ENCODE measurements at regions of chr10 and their contacts with region 1.

Region 1: GRCh38 chr10:101060036-101060950 is 1.5 kb upstream of the KAZALD1 start:
- DNase-seq: peak; percentile 70 to 97 (median 94)
- ATAC-seq: peak; percentile 82
- H3K4me3 ChIP-seq: peak overlapping the region; percentile 96
- H3K4me3 Mint-ChIP-seq: peak overlapping the region; percentile 90 to 99 (median 96)
- H3K27ac ChIP-seq: peak overlapping the region; percentile 96
- H3K27ac Mint-ChIP-seq: peak overlapping the region; percentile 86 to 98 (median 93)
- H3K4me1 ChIP-seq: peaks cover 12 to 21% of the 10 kb centered on the region in 2 donors
- H3K4me1 Mint-ChIP-seq: peaks cover 16 to 61% (median 31%) of the 10 kb centered on the region in 7 donors
- H3K27me3 ChIP-seq: peaks cover 5 to 18% of the 10 kb centered on the region in 2 donors
- H3K27me3 Mint-ChIP-seq: peaks cover 15 to 23% (median 18%) of the 10 kb centered on the region in 5 donors

Region 2: DNA sequence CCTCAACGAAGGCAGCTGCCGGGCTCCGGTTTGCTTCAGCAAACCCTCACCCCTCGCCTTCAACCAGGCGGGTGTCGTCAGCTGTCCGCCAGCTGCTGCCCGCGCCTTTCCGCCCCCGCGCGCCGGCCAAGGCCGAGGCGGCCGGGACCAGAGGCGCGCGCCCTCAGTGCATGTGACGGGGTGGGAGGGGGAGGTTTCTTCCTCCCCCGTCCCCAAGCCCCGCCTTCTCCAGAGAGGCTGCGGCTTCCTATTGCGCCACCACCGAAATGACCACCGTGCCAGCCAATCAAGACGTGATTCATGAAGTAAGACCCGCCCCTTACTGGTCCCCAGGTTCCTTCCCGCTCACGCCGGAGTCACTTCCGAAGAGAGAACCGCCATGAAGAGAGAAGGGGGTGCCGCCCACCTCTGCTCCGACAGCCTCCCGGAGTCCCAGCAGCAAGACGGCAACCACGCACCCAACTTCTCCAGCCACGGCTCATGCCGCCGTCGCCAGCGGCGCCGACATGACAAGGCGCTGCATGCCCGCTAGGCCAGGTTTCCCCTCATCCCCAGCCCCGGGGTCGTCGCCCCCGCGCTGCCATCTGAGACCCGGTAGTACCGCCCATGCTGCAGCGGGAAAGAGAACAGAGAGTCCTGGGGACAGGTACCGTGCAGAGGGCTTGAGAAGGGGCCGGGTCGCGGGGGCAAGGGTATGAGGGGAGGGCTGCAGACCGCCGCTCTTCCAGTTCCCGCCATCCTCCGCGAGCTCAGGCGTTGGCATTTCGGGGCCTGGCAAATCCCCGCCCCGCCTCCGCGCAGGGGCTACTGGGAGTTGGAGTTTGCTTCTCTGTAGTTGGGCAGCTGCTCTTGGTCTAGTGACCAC is 147.5 kb before region 1 on chr10 and contains the start of gene SLF2:
- CTCF ChIA-PET with region 1: no interaction called
- POLR2A ChIA-PET with region 1: no interaction called
- intact Hi-C with region 1: loop called (anchors 1 to 2 kb)
- DNase-seq: peak; percentile 69 to 91 (median 88)
- ATAC-seq: peak; percentile 96
- H3K4me3 ChIP-seq: peak within 1 kb of the TSS; percentile 96
- H3K4me3 Mint-ChIP-seq: peak within 1 kb of the TSS; percentile 91 to 100 (median 99)
- H3K27ac ChIP-seq: peak within 1 kb of the TSS; percentile 89
- H3K27ac Mint-ChIP-seq: peak within 1 kb of the TSS; percentile 88 to 99 (median 97)
- H3K4me1 ChIP-seq: peaks cover 12 to 13% of the 10 kb centered on the region in 2 donors
- H3K4me1 Mint-ChIP-seq: peaks cover 22 to 63% (median 60%) of the 10 kb centered on the region in 7 donors
- H3K27me3 ChIP-seq: no peaks in the 10 kb centered on the region
- H3K27me3 Mint-ChIP-seq: no peaks in the 10 kb centered on the region
- total RNA-seq, gene SLF2: 20.1 to 43.7 (median 38.8) TPM

Region 3: DNA sequence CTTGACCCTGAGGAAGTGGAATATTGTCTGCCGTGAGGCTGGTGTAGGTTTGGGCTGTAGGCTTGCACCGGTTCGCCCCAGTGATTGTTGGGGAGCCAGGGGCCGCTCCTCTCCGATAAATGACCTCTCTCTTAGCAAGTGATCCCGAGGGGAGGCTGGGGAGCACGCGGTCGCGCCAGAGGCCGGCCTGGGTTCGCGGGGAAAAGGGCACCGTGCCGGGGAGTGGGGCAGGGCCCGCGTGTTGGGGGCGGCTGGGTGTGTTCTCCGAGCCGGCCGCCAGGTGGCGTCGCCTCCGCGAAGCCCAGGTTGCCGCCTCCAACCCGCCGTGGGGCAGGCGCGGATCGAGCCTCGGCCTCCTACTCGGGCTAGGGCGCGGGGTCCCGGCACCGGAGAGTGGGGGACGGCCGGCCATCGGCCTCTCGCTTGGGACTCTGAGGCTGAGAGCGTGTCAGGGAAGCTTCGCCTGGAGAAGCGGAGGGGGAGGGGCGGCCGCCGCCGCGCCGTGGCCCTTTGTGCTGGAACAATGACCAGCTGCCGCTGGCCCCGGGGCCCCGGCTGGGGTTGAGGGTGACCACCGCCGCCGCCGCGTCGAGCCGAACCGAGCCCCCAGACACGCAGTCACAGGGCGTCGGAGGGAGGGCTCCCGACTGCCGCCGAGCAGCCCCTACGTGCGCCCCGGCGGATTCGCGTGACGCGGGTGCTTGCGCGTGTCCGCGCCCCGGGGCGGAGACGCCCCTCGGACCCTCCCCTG is 61.1 kb before region 1 on chr10:
- CTCF ChIA-PET with region 1: interaction called, 3 read pairs
- POLR2A ChIA-PET with region 1: no interaction called
- intact Hi-C with region 1: loop called (anchors 1 to 2 kb)
- DNase-seq: peak; percentile 69 to 90 (median 82)
- ATAC-seq: peak; percentile 82
- H3K4me3 ChIP-seq: peak overlapping the region; percentile 87
- H3K4me3 Mint-ChIP-seq: peak overlapping the region; percentile 87 to 98 (median 92)
- H3K27ac ChIP-seq: peak overlapping the region; percentile 99
- H3K27ac Mint-ChIP-seq: peak overlapping the region; percentile 88 to 99 (median 94)
- H3K4me1 ChIP-seq: peaks cover 20 to 22% of the 10 kb centered on the region in 2 donors
- H3K4me1 Mint-ChIP-seq: peaks cover 15 to 37% (median 23%) of the 10 kb centered on the region in 7 donors
- H3K27me3 ChIP-seq: no peaks in the 10 kb centered on the region
- H3K27me3 Mint-ChIP-seq: no peaks in the 10 kb centered on the region

Region 4: GRCh38 chr10:101042667-101043355 is 17.5 kb before region 1 on chr10:
- CTCF ChIA-PET with region 1: interaction called, 100 read pairs
- POLR2A ChIA-PET with region 1: interaction called, 15 read pairs
- intact Hi-C with region 1: loop called (anchors 1 kb)
- DNase-seq: peak; percentile 49 to 86 (median 57)
- ATAC-seq: peak; percentile 87
- H3K4me3 ChIP-seq: peak overlapping the region; percentile 82
- H3K4me3 Mint-ChIP-seq: peak overlapping the region; percentile 86 to 99 (median 94)
- H3K27ac ChIP-seq: peak overlapping the region; percentile 67
- H3K27ac Mint-ChIP-seq: peak overlapping the region; percentile 81 to 96 (median 88)
- H3K4me1 ChIP-seq: peaks cover 5 to 14% of the 10 kb centered on the region in 2 donors
- H3K4me1 Mint-ChIP-seq: peaks cover 20 to 27% (median 24%) of the 10 kb centered on the region in 7 donors
- H3K27me3 ChIP-seq: no peaks in the 10 kb centered on the region
- H3K27me3 Mint-ChIP-seq: peaks cover 10 to 44% (median 21%) of the 10 kb centered on the region in 5 donors

Region 5: DNA sequence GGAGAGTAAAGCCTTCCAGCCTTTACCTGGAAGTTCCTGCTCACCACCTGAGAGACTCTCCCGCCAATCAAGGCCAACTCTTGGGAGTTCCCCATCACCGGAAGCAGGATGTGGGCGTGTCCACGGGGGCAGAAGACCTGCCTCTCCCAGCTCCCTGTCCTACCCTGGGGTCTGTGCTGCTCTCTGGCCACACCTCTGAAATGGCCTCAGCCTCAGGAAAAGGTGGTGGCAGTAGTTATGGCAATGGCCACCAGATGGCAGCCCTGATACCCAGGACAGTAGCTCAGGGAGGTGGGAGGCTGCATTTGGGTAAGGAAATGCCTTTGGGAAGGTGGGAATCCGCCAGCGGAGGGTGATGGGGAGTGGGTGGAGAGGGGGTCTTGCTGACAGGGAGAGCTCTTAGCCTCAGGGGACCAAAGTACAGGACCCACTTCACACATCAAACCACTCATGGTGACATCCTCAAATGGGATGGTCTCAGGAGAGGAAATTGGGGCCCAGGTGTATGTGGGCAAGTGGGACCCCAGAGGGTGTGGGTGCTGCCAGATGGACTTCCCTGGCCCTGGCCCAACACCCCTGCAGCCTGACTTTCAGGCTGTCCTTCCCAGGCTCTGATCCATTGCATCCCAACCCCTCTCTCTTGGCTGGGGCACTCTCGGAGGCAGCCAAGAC is 35.4 kb after region 1 on chr10:
- CTCF ChIA-PET with region 1: no interaction called
- POLR2A ChIA-PET with region 1: no interaction called
- intact Hi-C with region 1: loop called in 1 of 2 experiments (anchors 2 kb)
- DNase-seq: peak; percentile 45 to 71 (median 59)
- ATAC-seq: peak; percentile 88
- H3K4me3 ChIP-seq: no peak overlapping the region
- H3K4me3 Mint-ChIP-seq: no peak overlapping the region
- H3K27ac ChIP-seq: no peak overlapping the region
- H3K27ac Mint-ChIP-seq: peak overlapping the region in 1 of 9 donors; percentile 34
- H3K4me1 ChIP-seq: peaks cover 3 to 4% of the 10 kb centered on the region in 2 donors
- H3K4me1 Mint-ChIP-seq: peaks cover 0 to 4% (median 0%) of the 10 kb centered on the region in 7 donors
- H3K27me3 ChIP-seq: peaks cover 0 to 5% of the 10 kb centered on the region in 2 donors
- H3K27me3 Mint-ChIP-seq: peaks cover 27 to 59% (median 51%) of the 10 kb centered on the region in 5 donors

Region 6: DNA sequence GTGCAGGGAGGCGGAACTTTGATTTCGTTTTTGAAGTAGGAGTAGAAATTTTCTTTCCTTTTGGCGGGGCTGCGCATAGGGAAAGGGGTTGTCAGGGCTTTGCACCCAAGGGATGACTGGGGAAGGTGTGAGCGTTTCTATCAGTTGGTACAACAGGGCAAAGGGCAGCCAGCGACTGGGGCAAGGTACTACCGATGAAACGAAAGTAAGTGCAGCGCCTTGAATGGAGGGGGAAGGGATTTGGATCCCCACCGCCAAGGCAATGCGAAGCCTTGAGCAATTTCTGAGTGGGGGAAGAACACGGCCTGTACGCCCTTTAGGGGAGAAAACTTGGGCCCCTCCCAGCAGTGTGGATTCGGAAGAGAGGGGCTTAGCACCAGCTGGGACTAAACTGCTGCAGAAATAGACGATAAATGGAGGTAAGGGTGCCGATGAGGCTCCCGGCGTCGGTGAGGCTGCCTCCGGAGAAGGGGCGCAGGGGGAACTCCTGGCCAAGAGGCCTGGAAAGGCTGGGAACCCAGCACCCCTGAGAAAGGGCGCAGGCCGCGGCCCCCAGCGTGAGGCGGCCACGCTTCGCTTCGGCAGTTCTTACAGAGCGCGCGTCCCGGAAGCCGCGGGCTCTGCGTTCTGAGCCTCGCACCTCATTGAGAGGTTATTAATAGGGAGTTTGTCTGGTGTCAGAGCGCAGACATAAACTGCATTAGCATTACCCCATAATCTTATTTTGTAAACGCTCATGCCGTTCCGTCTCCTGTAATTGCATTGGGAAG is 60.8 kb after region 1 on chr10:
- CTCF ChIA-PET with region 1: no interaction called
- POLR2A ChIA-PET with region 1: no interaction called
- intact Hi-C with region 1: loop called in 1 of 2 experiments (anchors 1 kb)
- DNase-seq: peak in 8 of 9 donors; percentile 35 to 58 (median 47)
- ATAC-seq: peak; percentile 84
- H3K4me3 ChIP-seq: peak overlapping the region; percentile 87
- H3K4me3 Mint-ChIP-seq: peak overlapping the region; percentile 88 to 100 (median 96)
- H3K27ac ChIP-seq: peak overlapping the region; percentile 55
- H3K27ac Mint-ChIP-seq: peak overlapping the region; percentile 83 to 97 (median 90)
- H3K4me1 ChIP-seq: peaks cover 6 to 21% of the 10 kb centered on the region in 2 donors
- H3K4me1 Mint-ChIP-seq: peaks cover 21 to 32% (median 30%) of the 10 kb centered on the region in 7 donors
- H3K27me3 ChIP-seq: no peaks in the 10 kb centered on the region
- H3K27me3 Mint-ChIP-seq: peaks cover 41 to 86% (median 47%) of the 10 kb centered on the region in 5 donors